Gastrocnemius medialis (tissue), 4 donors: ENCODE measurements at regions of chr3 and their contacts with region 1.

Region 1: GRCh38 chr3:121545574-121546455 is at the start of gene POLQ:
- DNase-seq: peak; percentile 82 to 88
- ATAC-seq: peak; percentile 99
- H3K4me3 ChIP-seq: peak within 1 kb of the TSS; percentile 60 to 80 (median 68)
- H3K27ac ChIP-seq: peak within 1 kb of the TSS; percentile 70 to 87 (median 78)
- H3K4me1 ChIP-seq: peaks cover 3 to 7% of the 10 kb centered on the region in 2 donors
- H3K27me3 ChIP-seq: no peaks in the 10 kb centered on the region
- CTCF ChIP-seq: no peak
- POLR2A ChIP-seq: no peak
- total RNA-seq, gene POLQ: 0.07 to 0.24 (median 0.18) TPM in 3 of 4 donors, not detected in the other

Region 2: DNA sequence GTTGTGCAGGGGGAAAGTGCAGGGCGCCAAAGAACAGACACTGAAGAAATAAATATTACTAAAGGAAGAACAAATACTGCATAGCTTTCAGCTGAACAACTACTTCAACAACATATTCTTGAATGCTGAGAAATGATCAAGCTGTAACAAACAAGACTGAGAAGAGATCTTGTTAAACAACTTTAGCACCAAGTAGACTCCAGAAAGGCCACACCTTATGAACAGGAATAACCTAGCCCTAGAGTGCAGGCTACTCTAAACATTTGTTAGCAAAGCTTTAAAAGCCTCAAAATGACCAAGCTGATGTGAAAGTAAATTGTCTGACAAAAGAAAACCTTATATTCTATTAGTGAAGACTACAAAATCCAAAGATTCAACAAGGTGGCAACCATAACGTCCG is 83.2 kb before region 1 on chr3:
- in situ Hi-C with region 1: no loop called
- intact Hi-C with region 1: no loop called
- DNase-seq: no peak
- ATAC-seq: no peak
- H3K4me3 ChIP-seq: no peak overlapping the region
- H3K27ac ChIP-seq: no peak overlapping the region
- H3K4me1 ChIP-seq: no peaks in the 10 kb centered on the region
- H3K27me3 ChIP-seq: no peaks in the 10 kb centered on the region
- CTCF ChIP-seq: no peak
- POLR2A ChIP-seq: no peak

Region 3: DNA sequence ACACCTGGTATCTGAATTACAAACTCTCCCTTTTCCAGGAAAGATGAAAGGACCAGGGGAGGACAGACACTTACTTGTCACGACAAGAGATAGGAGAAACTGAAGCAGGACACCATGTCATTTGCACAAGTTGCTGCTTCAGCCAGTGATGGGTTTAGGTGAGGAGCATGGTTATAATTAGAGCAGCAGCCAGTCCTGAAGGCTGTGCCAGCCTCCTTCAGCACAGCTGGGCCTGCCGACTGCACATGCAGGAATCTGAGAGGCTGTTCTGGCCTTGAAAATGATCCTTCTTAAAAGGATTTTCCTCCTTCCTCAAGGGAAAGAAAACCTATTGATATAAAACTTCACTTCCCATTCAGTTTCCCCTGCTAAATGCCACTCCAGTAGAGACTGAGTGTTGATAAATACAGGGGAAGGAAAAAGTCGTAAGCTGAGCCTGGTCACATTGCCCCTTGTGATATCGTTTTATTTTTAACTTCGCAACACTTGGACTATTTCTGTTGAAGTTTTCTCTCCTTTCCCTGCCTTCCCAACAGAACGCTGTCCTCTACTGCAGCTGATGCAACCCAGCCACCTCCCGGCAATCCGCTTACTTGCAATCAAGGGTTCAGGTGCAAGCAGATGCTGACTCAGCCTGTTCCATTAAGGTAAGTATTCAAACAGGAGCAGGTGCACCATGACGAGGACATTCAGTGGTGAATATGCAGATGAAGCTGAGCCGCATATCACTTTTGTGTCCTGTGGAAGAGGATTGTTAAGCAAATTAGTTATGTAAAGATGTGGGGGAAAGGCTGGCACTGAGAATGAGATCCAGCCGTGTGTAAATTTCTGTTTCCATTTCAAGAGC is 47.3 kb after region 1 on chr3 and contains the start of gene FBXO40:
- in situ Hi-C with region 1: no loop called
- intact Hi-C with region 1: loop called (anchors 1 kb)
- DNase-seq: peak; percentile 79 to 91
- ATAC-seq: peak; percentile 88 to 90
- H3K4me3 ChIP-seq: peak within 1 kb of the TSS; percentile 47 to 53 (median 52)
- H3K27ac ChIP-seq: peak within 1 kb of the TSS; percentile 87 to 95 (median 94)
- H3K4me1 ChIP-seq: peaks cover 39 to 40% of the 10 kb centered on the region in 2 donors
- H3K27me3 ChIP-seq: no peaks in the 10 kb centered on the region
- CTCF ChIP-seq: no peak
- POLR2A ChIP-seq: peak; percentile 27 to 72
- total RNA-seq, gene FBXO40: 7.2 to 40.8 (median 28.7) TPM

Region 4: DNA sequence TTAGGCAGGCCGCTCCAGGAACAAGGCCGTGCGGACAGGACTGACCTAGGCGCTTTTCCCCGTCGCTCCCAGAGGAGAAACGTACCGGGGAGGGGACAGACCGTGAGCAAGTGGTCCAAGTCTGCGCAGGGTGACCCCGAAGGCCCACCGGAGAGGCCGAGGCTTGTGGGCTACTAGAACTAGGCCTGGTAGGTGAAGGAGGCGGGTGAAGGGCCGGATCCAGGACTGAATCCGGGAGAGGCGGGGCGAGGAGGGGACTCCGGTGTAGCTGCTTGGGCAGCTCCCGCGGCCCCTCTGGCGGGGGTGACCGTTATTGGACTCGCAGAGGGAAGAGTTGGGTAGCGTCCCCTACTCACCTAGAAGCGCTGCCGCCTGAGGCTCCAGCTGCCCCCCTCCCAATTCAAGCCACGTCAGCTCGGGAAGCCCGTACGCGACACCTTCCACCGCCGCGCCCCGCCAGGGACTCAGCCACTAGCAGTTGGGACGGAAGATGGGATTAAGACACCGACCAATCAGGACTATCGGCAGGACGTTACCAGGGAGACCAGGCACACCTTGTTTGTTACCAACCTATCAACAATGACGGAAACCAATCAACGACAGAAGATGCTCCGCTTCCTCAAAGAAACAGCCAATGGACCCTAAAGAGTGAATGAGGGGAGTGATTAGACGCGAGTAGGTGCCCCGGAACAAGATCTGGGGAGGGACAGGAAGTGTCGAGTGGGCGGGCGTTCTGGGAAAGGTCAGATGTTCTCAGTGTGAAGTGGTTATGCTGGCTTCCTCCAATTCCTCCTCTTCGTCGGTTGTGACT is 203.7 kb after region 1 on chr3 and contains the start of gene GOLGB1:
- in situ Hi-C with region 1: no loop called
- intact Hi-C with region 1: loop called (anchors 1 kb)
- DNase-seq: peak; percentile 96 to 97
- ATAC-seq: peak; percentile 98 to 100
- H3K4me3 ChIP-seq: peak within 1 kb of the TSS; percentile 68 to 95 (median 92)
- H3K27ac ChIP-seq: peak within 1 kb of the TSS; percentile 86 to 93 (median 89)
- H3K4me1 ChIP-seq: peaks cover 24 to 28% of the 10 kb centered on the region in 2 donors
- H3K27me3 ChIP-seq: peaks cover 0 to 2% (median 0%) of the 10 kb centered on the region in 3 donors
- CTCF ChIP-seq: peak in 1 of 5 experiments; percentile 12
- POLR2A ChIP-seq: peak; percentile 98
- total RNA-seq, gene GOLGB1: 18.1 to 31.6 (median 26.7) TPM

Region 5: DNA sequence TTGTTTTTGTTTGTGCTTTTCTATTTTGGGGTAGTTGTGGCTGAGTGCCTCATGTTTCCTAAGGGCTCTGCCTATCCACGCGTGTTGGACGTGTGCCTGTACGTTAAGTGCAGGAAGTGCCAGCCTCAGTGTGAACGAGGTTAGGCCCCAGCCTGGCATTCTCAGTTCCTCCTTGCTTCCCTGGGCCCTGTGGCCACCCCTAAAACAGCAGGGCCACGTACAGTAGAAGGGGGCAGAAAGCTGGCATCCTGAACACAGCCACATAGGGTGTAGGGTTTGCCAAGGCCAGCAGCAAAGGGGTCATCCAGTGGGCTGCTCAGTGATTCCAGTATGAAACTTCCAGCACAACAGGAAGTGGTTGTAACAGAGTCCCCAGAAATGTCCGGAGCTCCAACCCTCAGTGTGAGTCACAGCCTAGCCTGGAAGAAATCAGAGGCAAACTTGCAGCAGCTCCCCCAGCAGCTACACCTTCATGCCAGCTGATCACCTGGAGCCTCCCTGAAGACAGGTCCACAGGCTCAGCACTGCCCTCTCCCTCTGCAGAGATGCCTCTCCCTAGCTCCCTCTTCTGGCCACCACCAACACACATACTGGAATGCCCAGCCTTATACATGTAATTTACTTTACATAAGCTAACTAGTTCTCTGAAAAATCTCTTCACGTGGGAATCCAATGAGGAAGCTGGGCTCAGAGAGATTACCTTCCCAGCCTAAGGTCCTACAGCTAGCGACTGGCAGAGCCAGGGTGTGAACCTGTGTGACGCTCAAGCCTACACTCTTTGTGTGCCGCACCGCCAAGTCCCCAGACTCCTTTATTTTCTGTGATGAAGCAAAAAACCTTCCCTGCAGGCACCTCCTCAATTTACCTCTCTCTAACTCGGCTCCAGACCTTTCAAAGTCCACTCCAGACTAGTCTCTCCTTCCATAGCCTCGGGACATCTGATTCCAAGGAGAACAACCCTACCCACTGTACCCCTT is 449.6 kb after region 1 on chr3:
- in situ Hi-C with region 1: no loop called
- intact Hi-C with region 1: loop called (anchors 5 kb)
- DNase-seq: peak in 1 of 2 donors; percentile 37
- ATAC-seq: peak in 1 of 2 donors; percentile 27
- H3K4me3 ChIP-seq: no peak overlapping the region
- H3K27ac ChIP-seq: no peak overlapping the region
- H3K4me1 ChIP-seq: no peaks in the 10 kb centered on the region
- H3K27me3 ChIP-seq: no peaks in the 10 kb centered on the region
- CTCF ChIP-seq: peak in 2 of 5 experiments; percentile 26 to 28
- POLR2A ChIP-seq: peak in 1 of 2 donors; percentile 14

Region 6: DNA sequence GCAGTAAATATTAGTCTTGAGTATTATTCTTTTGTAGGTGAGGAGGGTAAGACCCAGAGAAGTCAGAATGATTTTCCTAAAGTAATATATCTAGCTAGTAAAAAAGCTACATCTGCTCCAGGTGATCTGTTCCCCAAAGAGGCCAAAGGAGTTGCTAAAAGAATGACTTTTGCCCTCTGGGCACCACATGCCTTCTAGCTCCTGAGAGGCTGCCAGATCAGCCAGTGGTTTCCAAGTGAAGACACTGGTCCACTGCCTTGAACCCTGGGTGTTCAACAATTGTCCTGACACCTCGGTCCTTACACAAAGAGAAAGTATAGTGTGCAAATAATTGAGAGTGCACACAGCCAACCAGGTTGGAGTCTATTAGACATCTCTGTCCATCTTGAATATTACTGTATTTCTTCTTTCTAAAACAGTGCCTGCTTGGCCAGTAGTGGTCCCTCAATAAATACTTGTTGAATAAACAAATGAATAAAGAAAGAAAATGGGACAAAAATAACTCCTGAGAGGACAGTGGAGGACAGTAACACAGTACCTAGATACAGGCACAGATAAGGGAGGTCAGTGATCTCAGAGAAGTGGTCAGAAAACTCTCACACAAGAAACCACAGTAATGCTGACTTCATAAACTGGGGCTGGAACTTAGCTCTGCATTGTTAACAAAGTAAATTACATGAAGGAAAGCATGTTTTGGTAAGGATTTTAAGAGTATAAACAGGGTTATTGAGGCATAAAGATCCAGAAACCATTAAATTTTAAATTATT is 722.6 kb after region 1 on chr3:
- in situ Hi-C with region 1: loop called in 1 of 4 experiments (anchors 10 kb)
- intact Hi-C with region 1: no loop called
- DNase-seq: no peak
- ATAC-seq: no peak
- H3K4me3 ChIP-seq: no peak overlapping the region
- H3K27ac ChIP-seq: no peak overlapping the region
- H3K4me1 ChIP-seq: no peaks in the 10 kb centered on the region
- H3K27me3 ChIP-seq: no peaks in the 10 kb centered on the region
- CTCF ChIP-seq: no peak
- POLR2A ChIP-seq: no peak

Region 7: GRCh38 chr3:122383771-122384697 is 838.2 kb after region 1 on chr3 and contains the start of gene FAM162A:
- in situ Hi-C with region 1: loop called in 1 of 4 experiments (anchors 25 kb)
- intact Hi-C with region 1: loop called (anchors 5 kb)
- DNase-seq: peak; percentile 85 to 94
- ATAC-seq: peak; percentile 83 to 86
- H3K4me3 ChIP-seq: peak within 1 kb of the TSS; percentile 73 to 96 (median 86)
- H3K27ac ChIP-seq: peak within 1 kb of the TSS; percentile 89 to 97 (median 93)
- H3K4me1 ChIP-seq: peaks cover 24% of the 10 kb centered on the region in 2 donors
- H3K27me3 ChIP-seq: no peaks in the 10 kb centered on the region
- CTCF ChIP-seq: peak in 4 of 5 experiments; percentile 41 to 71 (median 56)
- POLR2A ChIP-seq: peak; percentile 93 to 95
- total RNA-seq, gene FAM162A: 18.8 to 52.4 (median 43.3) TPM

Region 8: DNA sequence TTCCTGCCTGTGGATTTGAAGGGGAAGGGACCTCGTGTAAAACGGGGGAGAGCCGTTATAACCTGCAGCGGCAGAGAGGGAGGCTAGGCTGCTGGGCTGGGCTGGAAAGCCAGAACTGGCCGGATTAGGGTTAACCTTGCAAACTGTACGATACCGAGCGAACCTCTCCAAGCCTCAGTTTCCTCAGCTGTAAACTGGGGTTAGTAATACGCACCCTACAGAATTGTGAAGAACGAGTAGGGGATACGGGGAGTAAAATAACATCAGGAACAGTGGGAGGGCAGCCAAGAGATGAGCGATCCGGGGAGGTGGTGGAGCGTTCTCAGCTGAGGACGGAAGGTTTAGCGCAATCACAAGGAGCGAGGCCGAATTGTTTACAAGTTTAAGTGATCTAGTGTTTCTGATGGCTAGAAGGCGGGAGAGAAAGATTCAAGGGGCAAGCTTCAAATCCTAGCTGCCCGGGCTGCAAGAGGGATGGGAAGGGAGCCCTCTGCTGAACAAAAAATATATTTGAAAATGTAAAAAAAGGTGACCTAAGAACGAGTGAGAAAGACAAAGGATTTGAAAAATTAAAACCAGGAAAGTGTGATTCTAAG is 1482.5 kb after region 1 on chr3:
- in situ Hi-C with region 1: no loop called
- intact Hi-C with region 1: loop called (anchors 10 kb)
- DNase-seq: no peak
- ATAC-seq: peak; percentile 53 to 55
- H3K4me3 ChIP-seq: peak overlapping the region; percentile 57 to 66 (median 64)
- H3K27ac ChIP-seq: peak overlapping the region in 1 of 4 donors; percentile 32
- H3K4me1 ChIP-seq: peaks cover 16 to 23% of the 10 kb centered on the region in 2 donors
- H3K27me3 ChIP-seq: peaks cover 43 to 65% (median 48%) of the 10 kb centered on the region in 3 donors
- CTCF ChIP-seq: peak in 2 of 5 experiments; percentile 22 to 28
- POLR2A ChIP-seq: no peak

Region 9: DNA sequence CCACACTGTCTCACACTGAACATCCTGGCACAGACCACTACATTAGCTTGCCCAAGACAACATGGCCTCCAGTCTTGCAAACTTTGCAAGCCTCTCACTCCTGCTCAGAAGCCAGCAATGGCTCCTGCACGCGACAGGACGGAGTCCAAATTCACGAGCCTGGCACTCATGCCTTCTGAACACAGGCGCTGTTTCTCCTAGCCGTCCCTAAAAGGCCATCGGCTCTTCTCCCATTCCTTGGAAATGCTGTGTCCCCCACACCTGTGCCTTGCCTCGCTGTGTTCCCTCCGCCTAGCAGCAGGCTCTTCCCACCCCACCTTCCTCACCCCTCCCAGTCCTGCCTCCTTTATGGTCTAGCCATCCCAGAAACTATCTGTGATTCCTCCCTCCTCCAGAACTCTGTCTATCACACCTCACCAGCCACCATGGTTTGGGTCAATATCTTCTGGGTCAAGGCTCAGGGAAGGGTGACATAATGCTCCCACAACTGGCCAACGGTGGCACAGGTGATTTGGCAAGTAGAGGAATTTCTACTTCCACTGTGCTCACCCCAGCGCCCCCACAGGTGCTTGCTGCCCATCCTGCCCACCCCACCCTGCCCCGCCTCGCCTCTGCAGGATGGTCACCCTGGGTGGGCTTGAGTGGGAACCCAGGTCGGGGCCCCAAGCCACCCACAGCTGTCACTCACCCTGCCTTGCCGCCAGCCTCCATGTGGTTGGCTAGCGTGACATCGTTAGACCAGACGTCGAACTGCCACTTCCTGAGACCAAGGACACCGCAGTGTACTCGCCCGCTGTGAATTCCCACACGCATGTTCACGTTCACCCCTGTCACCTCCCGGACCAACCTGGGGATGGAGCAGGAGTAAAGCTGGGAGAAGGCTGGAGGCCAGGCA is 1782.4 kb after region 1 on chr3:
- in situ Hi-C with region 1: no loop called
- intact Hi-C with region 1: no loop called
- DNase-seq: no peak
- ATAC-seq: peak in 1 of 2 donors; percentile 20
- H3K4me3 ChIP-seq: no peak overlapping the region
- H3K27ac ChIP-seq: no peak overlapping the region
- H3K4me1 ChIP-seq: no peaks in the 10 kb centered on the region
- H3K27me3 ChIP-seq: no peaks in the 10 kb centered on the region
- CTCF ChIP-seq: no peak
- POLR2A ChIP-seq: no peak